Gastrocnemius medialis (tissue), 4 donors: ENCODE measurements at regions of chr11 and their contacts with region 1.

Region 1: GRCh38 chr11:111694851-111695250 is 71.3 kb downstream of the PPP2R1B start:
- DNase-seq: peak in 1 of 2 donors; percentile 40
- ATAC-seq: peak; percentile 68 to 84
- H3K4me3 ChIP-seq: peak overlapping the region in 1 of 4 donors; percentile 0
- H3K27ac ChIP-seq: peak overlapping the region; percentile 65 to 81 (median 68)
- H3K4me1 ChIP-seq: peaks cover 33 to 56% of the 10 kb centered on the region in 2 donors
- H3K27me3 ChIP-seq: no peaks in the 10 kb centered on the region
- CTCF ChIP-seq: no peak
- POLR2A ChIP-seq: no peak

Region 2: DNA sequence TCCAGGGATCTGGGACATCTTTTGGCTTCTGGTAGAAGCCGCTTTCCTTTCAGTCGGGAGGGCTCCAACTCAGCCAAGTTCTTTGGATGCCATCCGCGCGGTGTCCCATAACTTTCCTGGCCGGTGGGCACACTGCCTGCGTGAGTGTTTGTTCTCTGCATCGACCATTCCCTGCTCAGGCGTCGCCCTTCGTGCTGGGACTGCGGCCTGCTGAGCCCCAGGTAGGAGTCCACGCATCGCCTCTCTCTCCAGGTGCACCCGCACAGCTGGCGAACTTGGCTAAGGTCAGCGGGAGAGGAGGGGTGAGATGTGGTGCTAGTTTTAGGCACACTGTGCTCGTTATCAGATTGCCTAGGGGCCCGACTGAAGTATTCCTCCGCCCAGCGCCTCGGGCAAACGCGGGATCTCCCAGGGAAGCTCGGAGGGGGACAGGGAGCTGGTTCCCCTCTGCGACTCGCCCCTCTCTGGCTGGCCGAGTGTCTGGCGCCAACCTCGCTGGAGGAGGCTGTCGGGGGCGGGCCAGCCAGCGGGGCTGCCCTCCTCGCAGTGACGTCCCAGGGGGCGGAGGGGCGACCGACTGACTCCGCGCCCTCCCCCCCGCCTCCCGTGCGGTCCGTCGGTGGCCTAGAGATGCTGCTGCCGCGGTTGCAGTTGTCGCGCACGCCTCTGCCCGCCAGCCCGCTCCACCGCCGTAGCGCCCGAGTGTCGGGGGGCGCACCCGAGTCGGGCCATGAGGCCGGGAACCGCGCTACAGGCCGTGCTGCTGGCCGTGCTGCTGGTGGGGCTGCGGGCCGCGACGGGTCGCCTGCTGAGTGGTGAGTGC is 154.5 kb before region 1 on chr11 and contains the start of gene LAYN:
- in situ Hi-C with region 1: no loop called
- intact Hi-C with region 1: no loop called
- DNase-seq: peak in 1 of 2 donors; percentile 18
- ATAC-seq: peak; percentile 12 to 37
- H3K4me3 ChIP-seq: peak within 1 kb of the TSS; percentile 60 to 75 (median 66)
- H3K27ac ChIP-seq: peak within 1 kb of the TSS; percentile 49 to 72 (median 67)
- H3K4me1 ChIP-seq: peaks cover 10 to 30% of the 10 kb centered on the region in 2 donors
- H3K27me3 ChIP-seq: no peaks in the 10 kb centered on the region
- CTCF ChIP-seq: no peak
- POLR2A ChIP-seq: peak in 1 of 2 donors; percentile 27
- total RNA-seq, gene LAYN: 0.46 to 3.7 (median 0.72) TPM in 3 of 4 donors, not detected in the other

Region 3: DNA sequence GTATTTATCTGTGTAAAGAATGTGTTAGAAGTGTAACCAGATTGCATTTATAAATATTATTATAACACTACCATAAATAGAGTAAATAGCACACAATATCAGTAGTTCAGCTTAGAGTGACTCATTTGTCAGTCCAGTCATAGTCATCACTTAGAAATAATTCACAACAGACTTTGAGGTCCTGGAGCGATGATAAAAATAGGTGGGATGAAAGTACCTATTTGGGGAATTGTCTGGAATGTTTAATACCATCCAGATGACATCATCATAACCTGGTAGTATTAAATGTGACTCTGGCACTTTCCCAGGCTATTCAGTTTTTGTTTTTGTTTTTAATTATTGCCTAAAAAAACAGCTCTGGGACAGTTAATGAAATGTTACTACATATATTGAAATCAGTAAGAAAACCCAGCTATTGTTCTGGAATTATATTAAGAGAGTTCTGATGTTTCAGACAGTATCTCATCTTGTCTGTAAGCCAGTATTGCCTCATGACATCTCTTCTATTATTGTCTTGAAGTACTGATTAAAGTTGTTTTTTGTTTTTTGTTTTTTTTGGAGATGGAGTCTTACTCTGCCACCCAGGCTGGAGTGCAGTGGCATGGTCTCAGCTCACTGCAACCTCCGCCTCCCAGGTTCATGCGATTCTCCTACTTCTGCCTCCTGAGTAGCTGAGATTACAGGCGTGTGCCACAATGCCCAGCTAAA is 17.8 kb before region 1 on chr11:
- in situ Hi-C with region 1: no loop called
- intact Hi-C with region 1: loop called (anchors 2 kb)
- DNase-seq: no peak
- ATAC-seq: peak; percentile 63 to 84
- H3K4me3 ChIP-seq: no peak overlapping the region
- H3K27ac ChIP-seq: peak overlapping the region; percentile 68 to 77 (median 71)
- H3K4me1 ChIP-seq: peaks cover 29 to 40% of the 10 kb centered on the region in 2 donors
- H3K27me3 ChIP-seq: no peaks in the 10 kb centered on the region
- CTCF ChIP-seq: no peak
- POLR2A ChIP-seq: no peak

Region 4: GRCh38 chr11:111718436-111718835 is 23.6 kb after region 1 on chr11:
- in situ Hi-C with region 1: no loop called
- intact Hi-C with region 1: no loop called
- DNase-seq: peak in 1 of 2 donors; percentile 70
- ATAC-seq: peak; percentile 93
- H3K4me3 ChIP-seq: peak overlapping the region in 2 of 4 donors; percentile 0 to 17
- H3K27ac ChIP-seq: peak overlapping the region; percentile 85 to 97 (median 88)
- H3K4me1 ChIP-seq: peaks cover 27 to 29% of the 10 kb centered on the region in 2 donors
- H3K27me3 ChIP-seq: no peaks in the 10 kb centered on the region
- CTCF ChIP-seq: no peak
- POLR2A ChIP-seq: peak; percentile 26 to 76